Dorsolateral prefrontal cortex (tissue), 120 donors: ENCODE measurements at regions of chr3 and their contacts with region 1.

Region 1: DNA sequence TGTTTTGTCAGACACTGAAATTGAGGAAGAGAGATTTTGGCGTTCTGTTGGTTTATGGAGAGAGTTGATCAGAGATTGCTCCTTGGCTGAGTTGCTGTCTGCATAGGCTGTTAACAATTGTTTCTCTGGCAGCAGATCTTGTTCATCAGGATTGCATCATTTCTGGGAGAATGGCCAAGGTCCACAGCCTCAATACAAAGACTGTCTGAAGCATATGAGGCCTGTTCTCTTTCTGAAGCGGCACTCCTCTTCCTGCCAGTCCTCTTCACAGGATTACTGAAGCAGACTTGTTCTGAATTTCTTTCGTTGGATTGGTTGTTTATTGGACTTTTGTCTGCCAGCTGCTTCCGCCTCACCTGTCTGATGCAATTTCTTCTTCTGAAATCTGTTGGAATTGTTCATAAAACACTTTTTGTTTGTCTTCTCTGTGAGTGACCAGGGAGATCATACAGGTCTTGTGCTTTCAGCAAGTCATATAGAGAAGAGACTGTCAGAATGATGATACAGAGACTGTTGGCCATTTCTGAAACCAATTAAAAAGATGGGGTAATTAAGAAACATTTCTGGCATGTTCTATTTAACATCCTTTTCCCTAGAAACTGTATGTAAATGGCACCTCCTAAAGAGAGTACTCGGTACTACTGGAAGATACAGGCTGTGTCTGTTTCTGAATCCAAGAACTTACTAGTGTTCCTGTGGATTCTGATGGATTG is 25.5 kb downstream of the SETD5 start:
- DNase-seq: peak in 9 of 10 donors; percentile 62 to 94 (median 75)
- H3K4me3 ChIP-seq: peak overlapping the region in 43 of 59 donors; percentile 0 to 48 (median 21)
- H3K27ac ChIP-seq: peak overlapping the region; percentile 33 to 97 (median 90)
- H3K27me3 ChIP-seq: no peaks in the 10 kb centered on the region
- CTCF ChIP-seq: peak in 52 of 56 donors; percentile 29 to 70 (median 50)

Region 2: GRCh38 chr3:9249273-9250192 is 173.3 kb before region 1 on chr3 and contains the start of gene SRGAP3:
- intact Hi-C with region 1: no loop called
- DNase-seq: peak; percentile 63 to 96 (median 92)
- H3K4me3 ChIP-seq: peak within 1 kb of the TSS; percentile 48 to 91 (median 77)
- H3K27ac ChIP-seq: peak within 1 kb of the TSS; percentile 15 to 92 (median 81)
- H3K27me3 ChIP-seq: no peaks in the 10 kb centered on the region
- CTCF ChIP-seq: peak in 49 of 56 donors; percentile 20 to 66 (median 47)
- total RNA-seq, gene SRGAP3: 93.9 to 187 (median 139) TPM

Region 3: DNA sequence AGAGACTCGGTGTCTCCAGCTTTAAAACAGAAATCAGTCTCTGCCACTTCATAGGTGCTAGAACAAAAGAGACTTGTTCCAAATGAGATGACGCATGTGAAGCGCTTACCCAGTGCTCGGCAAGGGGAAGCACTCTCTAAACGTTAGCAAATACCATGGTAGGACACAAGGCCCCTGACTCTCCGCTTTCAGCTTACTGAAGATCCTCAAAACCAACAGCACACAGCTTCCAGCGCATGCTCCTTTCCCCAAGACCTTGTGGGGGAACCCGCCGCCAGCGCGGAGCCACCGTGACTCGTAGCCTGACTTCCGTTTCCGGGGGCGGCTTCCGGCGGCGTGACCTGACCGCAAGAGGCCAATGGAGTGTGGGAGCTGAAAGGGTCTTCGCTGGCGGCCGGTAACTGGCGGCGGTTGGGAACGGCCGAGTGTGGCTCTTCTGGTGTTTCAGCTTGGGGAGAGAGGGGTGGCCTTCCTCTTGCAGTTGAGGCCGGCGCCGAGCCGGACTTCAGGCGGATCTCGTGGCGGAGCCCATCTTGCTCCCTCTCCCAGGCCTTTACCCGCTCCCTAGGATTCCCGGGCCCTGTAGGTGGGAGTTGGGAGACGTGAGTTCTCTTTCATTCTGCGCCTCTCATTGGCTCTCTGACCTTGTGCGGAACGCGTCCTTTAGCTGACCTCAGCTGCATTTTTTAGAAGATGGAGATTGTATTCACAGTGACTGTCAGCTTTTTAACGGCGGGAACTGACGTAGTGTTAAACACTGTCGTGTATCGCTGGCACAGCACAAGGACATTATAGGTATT is 59.9 kb before region 1 on chr3 and contains the start of gene THUMPD3:
- intact Hi-C with region 1: loop called (anchors 5 to 10 kb)
- DNase-seq: peak; percentile 91 to 97 (median 94)
- H3K4me3 ChIP-seq: peak within 1 kb of the TSS; percentile 40 to 97 (median 85)
- H3K27ac ChIP-seq: peak within 1 kb of the TSS in 58 of 59 donors; percentile 72 to 95 (median 88)
- H3K27me3 ChIP-seq: no peaks in the 10 kb centered on the region
- CTCF ChIP-seq: peak in 40 of 56 donors; percentile 8 to 58 (median 28)
- total RNA-seq, gene THUMPD3: 25.3 to 57.4 (median 39.8) TPM

Region 4: DNA sequence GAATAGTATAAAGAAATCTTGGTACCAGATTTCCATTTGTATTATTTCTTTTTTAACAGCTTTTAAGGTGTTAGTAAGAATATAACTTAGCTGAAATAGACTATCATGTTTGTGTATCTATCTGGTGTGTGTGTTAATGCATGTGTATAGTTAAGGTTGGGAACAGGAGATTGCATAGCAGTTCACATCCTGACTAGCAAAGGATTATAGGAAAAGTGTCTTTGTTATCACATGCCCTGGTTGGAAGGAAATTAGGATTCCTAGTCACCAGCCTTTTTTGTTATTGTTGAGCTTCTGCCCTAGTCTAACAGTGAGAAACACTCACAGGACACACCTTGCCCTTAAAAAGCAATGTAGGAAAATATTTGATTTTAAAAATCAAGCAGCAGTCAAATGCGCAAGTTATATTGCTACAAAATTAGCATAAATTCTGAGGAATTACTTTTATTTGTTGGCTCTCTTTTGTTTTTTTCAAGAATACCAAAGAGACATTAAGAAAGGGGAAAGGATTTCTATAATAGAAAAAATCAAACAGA is 32.8 kb after region 1 on chr3:
- intact Hi-C with region 1: no loop called
- DNase-seq: no peak
- H3K4me3 ChIP-seq: no peak overlapping the region
- H3K27ac ChIP-seq: no peak overlapping the region
- H3K27me3 ChIP-seq: no peaks in the 10 kb centered on the region
- CTCF ChIP-seq: no peak

Region 5: DNA sequence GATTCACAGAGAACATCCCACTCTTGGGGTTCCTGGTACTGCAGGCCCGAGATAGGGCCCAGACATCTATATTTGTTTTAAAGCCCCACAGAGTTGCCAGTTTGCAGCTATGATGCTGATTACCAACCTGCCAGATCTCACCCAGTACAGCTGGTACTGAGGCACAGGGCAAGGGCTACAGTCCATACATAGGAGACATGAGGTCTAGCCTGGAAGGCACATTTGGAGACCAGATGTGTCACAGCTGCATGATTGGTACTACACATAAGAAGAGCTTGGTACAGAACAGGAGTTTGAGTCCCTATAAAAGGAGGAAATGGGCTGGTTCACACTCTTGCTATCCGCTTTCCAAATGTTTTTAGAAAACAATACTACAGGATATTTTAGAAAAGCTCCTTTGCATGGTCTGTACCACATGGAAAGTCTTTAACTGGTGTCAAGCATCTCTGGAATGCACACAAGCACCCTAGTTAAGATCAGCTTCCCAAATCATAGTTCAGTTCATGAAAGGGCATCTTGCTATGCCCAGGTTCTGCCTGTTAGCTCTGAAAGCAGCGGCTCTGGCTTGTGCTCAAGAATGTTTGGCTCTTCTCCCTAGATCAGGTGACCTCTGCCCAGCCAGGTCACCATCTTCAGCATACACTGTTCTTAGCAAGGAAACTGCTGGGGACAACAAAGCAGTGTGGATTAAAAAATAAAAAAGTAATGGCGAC is 247.0 kb after region 1 on chr3:
- intact Hi-C with region 1: no loop called
- DNase-seq: no peak
- H3K4me3 ChIP-seq: no peak overlapping the region
- H3K27ac ChIP-seq: peak overlapping the region in 3 of 59 donors; percentile 19 to 35 (median 25)
- H3K27me3 ChIP-seq: no peaks in the 10 kb centered on the region
- CTCF ChIP-seq: no peak